ENCODE measurements at regions of chr17 and their contacts with region 1.

Region 1: GRCh38 chr17:72191921-72192799 is 71.3 kb downstream of the SOX9 start:
- DNase-seq: peak; percentile 32 to 37
- ATAC-seq: peak; percentile 75 to 88 (median 82)
- H3K4me3 ChIP-seq: no peak overlapping the region
- H3K27ac ChIP-seq: peak overlapping the region in 9 of 10 donors; percentile 40 to 72 (median 53)
- H3K4me1 ChIP-seq: peaks cover 0 to 30% (median 0%) of the 10 kb centered on the region in 9 donors
- H3K27me3 ChIP-seq: peaks cover 0 to 6% (median 0%) of the 10 kb centered on the region in 7 donors
- CTCF ChIP-seq: no peak

Region 2: GRCh38 chr17:72126563-72127486 is 65.3 kb before region 1 on chr17:
- intact Hi-C with region 1: loop called in 4 of 10 experiments (anchors 5 to 10 kb)
- DNase-seq: peak in 1 of 2 donors; percentile 25
- ATAC-seq: peak in 7 of 8 donors; percentile 31 to 75 (median 68)
- H3K4me3 ChIP-seq: no peak overlapping the region
- H3K27ac ChIP-seq: peak overlapping the region; percentile 3 to 94 (median 70)
- H3K4me1 ChIP-seq: peaks cover 0 to 47% (median 28%) of the 10 kb centered on the region in 9 donors
- H3K27me3 ChIP-seq: peaks cover 0 to 35% (median 27%) of the 10 kb centered on the region in 7 donors
- CTCF ChIP-seq: no peak

Region 3: GRCh38 chr17:72297326-72298115 is 105.4 kb after region 1 on chr17:
- intact Hi-C with region 1: loop called in 1 of 10 experiments (anchors 10 kb)
- DNase-seq: peak; percentile 14 to 17
- ATAC-seq: peak; percentile 45 to 76 (median 66)
- H3K4me3 ChIP-seq: no peak overlapping the region
- H3K27ac ChIP-seq: no peak overlapping the region
- H3K4me1 ChIP-seq: peaks cover 0 to 22% (median 11%) of the 10 kb centered on the region in 9 donors
- H3K27me3 ChIP-seq: peaks cover 0 to 14% (median 0%) of the 10 kb centered on the region in 7 donors
- CTCF ChIP-seq: no peak

Region 4: DNA sequence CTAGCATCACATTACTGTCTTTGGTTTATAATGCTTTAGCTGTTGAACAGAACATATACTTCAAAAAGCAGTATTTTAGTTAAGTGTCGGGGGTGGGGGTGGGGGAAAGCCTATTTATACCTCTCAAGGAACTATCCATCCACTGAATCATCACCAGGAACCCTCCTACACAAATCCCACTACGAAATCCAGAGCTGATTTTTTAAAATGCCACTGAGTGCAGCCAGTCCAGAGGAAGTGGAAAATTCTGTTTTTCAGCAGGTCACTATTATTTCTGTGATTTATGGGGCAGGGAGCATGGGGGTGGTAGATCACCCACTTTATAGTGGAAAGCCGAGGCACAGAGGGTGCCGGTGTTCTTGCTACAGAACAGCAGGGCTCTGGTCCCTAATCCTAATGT is 212.7 kb after region 1 on chr17:
- intact Hi-C with region 1: no loop called
- DNase-seq: no peak
- ATAC-seq: no peak
- H3K4me3 ChIP-seq: no peak overlapping the region
- H3K27ac ChIP-seq: no peak overlapping the region
- H3K4me1 ChIP-seq: peaks cover 0 to 16% (median 8%) of the 10 kb centered on the region in 9 donors
- H3K27me3 ChIP-seq: peaks cover 0 to 5% (median 0%) of the 10 kb centered on the region in 7 donors
- CTCF ChIP-seq: no peak

Region 5: GRCh38 chr17:72510397-72511016 is 318.3 kb after region 1 on chr17:
- intact Hi-C with region 1: loop called in 1 of 10 experiments (anchors 10 kb)
- DNase-seq: no peak
- ATAC-seq: no peak
- H3K4me3 ChIP-seq: no peak overlapping the region
- H3K27ac ChIP-seq: no peak overlapping the region
- H3K4me1 ChIP-seq: peaks cover 0 to 11% (median 5%) of the 10 kb centered on the region in 9 donors
- H3K27me3 ChIP-seq: no peaks in the 10 kb centered on the region
- CTCF ChIP-seq: no peak

Measured in heart right ventricle (tissue), 16 donors.